Ascending aorta (tissue), 2 donors: ENCODE measurements at regions of chr7 and their contacts with region 1.

Region 1: DNA sequence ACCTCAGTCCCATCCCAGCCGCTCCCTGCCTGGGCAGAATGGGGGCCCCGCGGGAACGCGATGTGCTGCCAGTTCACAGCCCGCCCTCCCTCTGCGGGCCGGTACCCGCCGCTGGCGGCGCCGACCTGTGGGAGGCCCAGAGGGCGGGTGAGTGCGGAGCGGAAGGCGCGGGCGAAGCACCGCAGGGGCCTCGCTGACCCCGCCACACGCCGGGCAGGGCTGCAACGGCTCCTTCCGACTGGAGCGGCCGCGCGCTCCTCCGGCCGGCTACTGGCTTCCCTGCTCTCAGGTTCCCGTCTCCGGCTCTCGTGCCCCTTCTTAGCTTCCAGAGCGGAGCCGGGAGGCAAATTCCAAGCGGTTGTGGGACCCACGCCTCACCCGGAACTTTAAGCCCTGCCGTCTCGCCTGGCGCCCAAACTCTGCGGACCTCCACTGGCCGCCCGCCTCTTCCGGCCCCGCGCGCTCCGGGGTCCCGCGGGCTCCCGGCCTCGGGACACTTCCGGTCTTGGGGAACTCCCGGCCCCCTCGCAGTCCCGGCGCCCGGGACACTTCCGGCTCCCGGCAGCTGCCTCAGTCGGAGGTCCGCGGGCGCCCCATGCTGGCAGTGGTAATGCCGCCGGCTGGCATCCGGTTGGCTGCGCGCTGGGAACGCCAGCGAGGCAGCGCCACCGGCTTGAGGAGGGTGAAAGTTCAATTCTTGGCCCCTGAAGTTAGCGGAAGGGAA is at the start of gene CYREN:
- DNase-seq: peak; percentile 81 to 97
- H3K4me3 ChIP-seq: peak within 1 kb of the TSS; percentile 68 to 92
- H3K27ac ChIP-seq: peak within 1 kb of the TSS; percentile 95 to 98
- H3K4me1 ChIP-seq: peaks cover 15 to 27% of the 10 kb centered on the region in 2 donors
- H3K27me3 ChIP-seq: no peaks in the 10 kb centered on the region
- CTCF ChIP-seq: peak; percentile 80 to 86 (median 81)
- total RNA-seq, gene CYREN: 21.6 TPM

Region 2: DNA sequence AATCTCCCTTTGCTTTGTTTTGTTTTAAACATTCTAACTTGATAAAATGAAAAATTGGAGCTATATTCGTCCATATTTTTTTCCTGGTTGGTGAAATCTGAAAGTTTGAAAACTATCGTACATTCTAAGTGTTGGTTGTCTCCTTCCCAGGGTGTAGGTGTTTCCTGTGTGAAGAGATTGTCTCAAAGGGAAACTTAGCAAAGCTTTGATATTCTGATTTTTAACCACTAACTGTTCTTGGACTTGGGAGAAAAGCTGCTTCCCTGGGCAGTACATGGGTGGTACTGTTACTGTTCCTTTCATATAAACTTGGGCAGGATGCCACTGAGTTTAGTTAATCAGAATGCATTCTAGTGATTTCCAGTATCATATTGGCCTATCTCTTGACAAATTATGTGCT is 1296.8 kb before region 1 on chr7:
- intact Hi-C with region 1: no loop called
- DNase-seq: no peak
- H3K4me3 ChIP-seq: no peak overlapping the region
- H3K27ac ChIP-seq: no peak overlapping the region
- H3K4me1 ChIP-seq: no peaks in the 10 kb centered on the region
- H3K27me3 ChIP-seq: no peaks in the 10 kb centered on the region
- CTCF ChIP-seq: no peak

Region 3: GRCh38 chr7:134646425-134647305 is 523.8 kb before region 1 on chr7 and contains the start of gene BPGM:
- intact Hi-C with region 1: loop called (anchors 1 kb)
- DNase-seq: peak; percentile 96 to 99
- H3K4me3 ChIP-seq: peak within 1 kb of the TSS; percentile 73 to 81
- H3K27ac ChIP-seq: peak within 1 kb of the TSS; percentile 74 to 84
- H3K4me1 ChIP-seq: peaks cover 2 to 6% of the 10 kb centered on the region in 2 donors
- H3K27me3 ChIP-seq: no peaks in the 10 kb centered on the region
- CTCF ChIP-seq: no peak
- total RNA-seq, gene BPGM: 19.2 TPM

Region 4: GRCh38 chr7:134789967-134790685 is 380.3 kb before region 1 on chr7:
- intact Hi-C with region 1: loop called (anchors 10 kb)
- DNase-seq: no peak
- H3K4me3 ChIP-seq: peak overlapping the region; percentile 25 to 73
- H3K27ac ChIP-seq: peak overlapping the region; percentile 82 to 85
- H3K4me1 ChIP-seq: peaks cover 12 to 75% of the 10 kb centered on the region in 2 donors
- H3K27me3 ChIP-seq: no peaks in the 10 kb centered on the region
- CTCF ChIP-seq: no peak

Region 5: GRCh38 chr7:134932707-134933370 is 237.6 kb before region 1 on chr7:
- intact Hi-C with region 1: loop called (anchors 5 kb)
- DNase-seq: peak; percentile 23 to 91
- H3K4me3 ChIP-seq: peak overlapping the region; percentile 7 to 28
- H3K27ac ChIP-seq: peak overlapping the region; percentile 74 to 90
- H3K4me1 ChIP-seq: peaks cover 32 to 49% of the 10 kb centered on the region in 2 donors
- H3K27me3 ChIP-seq: no peaks in the 10 kb centered on the region
- CTCF ChIP-seq: no peak

Region 6: DNA sequence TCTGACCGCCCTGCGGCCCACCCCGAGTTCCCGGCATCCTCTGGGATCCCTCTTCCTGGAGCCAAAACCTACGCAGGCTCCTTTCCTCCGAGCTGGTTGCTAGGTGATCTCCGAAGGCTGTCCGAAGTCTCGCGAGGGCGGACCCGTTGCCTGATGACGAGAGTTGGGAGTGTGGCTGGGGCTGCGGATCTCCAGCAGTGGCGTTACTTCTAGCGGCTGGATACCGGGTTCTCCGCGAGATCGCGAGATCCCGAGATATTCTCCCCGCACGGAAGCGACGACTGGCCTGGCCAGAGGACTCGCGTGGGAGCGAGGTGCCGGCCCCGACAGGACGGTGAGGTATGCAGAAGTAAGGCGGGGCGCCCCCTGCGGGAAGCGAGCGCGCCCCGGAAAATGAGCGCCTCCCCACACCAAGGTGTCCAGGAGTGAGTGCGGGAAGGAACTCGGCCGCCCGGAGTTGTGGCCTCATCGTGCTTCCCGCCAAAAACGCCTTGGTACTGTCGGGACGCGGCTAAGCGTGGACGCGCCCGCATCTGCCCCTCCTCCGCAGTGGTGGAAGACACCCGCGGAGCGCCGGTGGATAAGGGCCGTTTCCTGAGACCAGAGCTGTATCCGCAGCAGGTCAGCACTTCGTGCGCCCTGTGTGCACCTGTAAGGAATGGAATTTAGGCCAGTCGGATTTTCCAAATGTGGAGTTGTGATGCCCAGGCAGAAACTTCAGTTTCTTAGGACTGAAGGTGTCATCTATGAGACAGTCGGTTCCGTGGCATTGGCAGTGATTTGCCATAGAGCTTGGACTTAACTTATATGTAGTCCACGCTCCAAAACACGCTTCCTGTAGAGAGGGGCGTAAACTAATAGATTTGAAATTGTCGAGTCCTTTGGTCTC is 183.8 kb before region 1 on chr7 and contains the start of gene AGBL3:
- intact Hi-C with region 1: loop called (anchors 1 kb)
- DNase-seq: peak; percentile 89 to 99
- H3K4me3 ChIP-seq: peak within 1 kb of the TSS; percentile 72 to 73
- H3K27ac ChIP-seq: peak within 1 kb of the TSS; percentile 86 to 87
- H3K4me1 ChIP-seq: peaks cover 0 to 18% of the 10 kb centered on the region in 2 donors
- H3K27me3 ChIP-seq: no peaks in the 10 kb centered on the region
- CTCF ChIP-seq: peak; percentile 51 to 74 (median 67)
- total RNA-seq, gene AGBL3: 2.8 TPM

Region 7: GRCh38 chr7:135147899-135148721 is 22.3 kb before region 1 on chr7 and contains the start of gene TMEM140:
- intact Hi-C with region 1: loop called (anchors 1 kb)
- DNase-seq: no peak
- H3K4me3 ChIP-seq: peak within 1 kb of the TSS; percentile 63 to 65
- H3K27ac ChIP-seq: peak within 1 kb of the TSS; percentile 94
- H3K4me1 ChIP-seq: peaks cover 4 to 24% of the 10 kb centered on the region in 2 donors
- H3K27me3 ChIP-seq: no peaks in the 10 kb centered on the region
- CTCF ChIP-seq: peak in 1 of 3 experiments; percentile 7
- total RNA-seq, gene TMEM140: 26.9 TPM

Region 8: DNA sequence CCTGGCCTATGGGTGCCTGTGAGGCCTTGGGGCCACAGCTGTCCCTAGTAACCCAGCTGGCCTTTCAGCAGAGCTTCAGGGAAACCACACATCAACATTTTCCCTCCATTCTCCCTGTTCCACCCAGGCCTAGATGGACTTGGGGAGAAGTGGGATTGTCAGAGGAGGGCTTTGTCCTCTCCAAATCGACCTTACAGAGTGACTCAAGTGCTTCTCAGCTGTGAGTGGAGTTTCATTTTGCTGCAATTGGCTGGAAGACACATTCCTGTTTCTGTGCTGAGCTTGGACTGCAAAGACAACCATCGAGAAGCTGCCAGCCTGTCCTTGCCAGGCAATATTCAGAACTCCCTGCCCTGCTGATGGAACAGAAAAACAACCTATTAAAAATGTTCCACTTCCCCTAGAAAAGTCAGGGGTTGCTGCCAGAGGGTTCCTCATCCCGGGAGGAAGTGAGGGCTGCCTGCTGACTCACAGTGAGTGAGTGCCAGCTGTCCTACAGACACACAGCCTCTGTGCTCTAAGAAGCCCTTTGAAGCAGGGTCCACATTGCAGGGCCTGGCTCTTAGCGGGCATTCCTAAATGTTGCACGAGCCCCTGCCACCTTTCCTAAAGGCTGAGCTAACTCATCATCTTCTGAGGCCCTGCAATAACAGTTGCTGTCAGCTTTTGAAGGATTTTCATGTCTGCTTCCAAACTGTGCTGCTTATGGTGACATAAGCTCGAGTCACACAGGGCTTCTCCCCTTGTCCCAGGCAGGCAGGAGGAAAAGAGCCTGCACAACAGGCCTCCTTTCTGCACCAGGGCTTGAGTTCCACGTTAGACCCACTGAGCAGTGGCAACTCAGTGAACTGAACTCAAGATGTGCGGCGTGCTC is 83.7 kb after region 1 on chr7:
- intact Hi-C with region 1: loop called (anchors 5 kb)
- DNase-seq: peak; percentile 65 to 92
- H3K4me3 ChIP-seq: peak overlapping the region in 1 of 2 donors; percentile 2
- H3K27ac ChIP-seq: peak overlapping the region; percentile 83 to 84
- H3K4me1 ChIP-seq: peaks cover 11 to 20% of the 10 kb centered on the region in 2 donors
- H3K27me3 ChIP-seq: no peaks in the 10 kb centered on the region
- CTCF ChIP-seq: no peak